ENCODE measurements at regions of chr3 and their contacts with region 1.

Region 1: GRCh38 chr3:51982782-51983577 is at the start of gene ACY1:
- DNase-seq: peak in 1 of 2 experiments; percentile 89
- H3K4me3 ChIP-seq: peak within 1 kb of the TSS; percentile 53 to 63 (median 56)
- H3K27ac ChIP-seq: peak within 1 kb of the TSS; percentile 45; the same call in 1 of the 2 replicates
- H3K4me1 ChIP-seq: peaks cover 0 to 12% (median 9%) of the 10 kb centered on the region in 4 experiments; a peak in 6 of 7 replicates
- H3K27me3 ChIP-seq: no peaks in the 10 kb centered on the region
- CTCF ChIP-seq: no peak
- EP300 ChIP-seq: no peak
- POLR2A ChIP-seq: peak in 1 of 2 experiments; percentile 86; a peak in 2 of 3 replicates
- RAD21 ChIP-seq: no peak
- total RNA-seq, gene ACY1: 45.5 and 48.3 TPM in 2 replicates

Region 2: GRCh38 chr3:51967384-51968169 is 15.4 kb before region 1 on chr3 and contains the start of gene PCBP4:
- CTCF ChIA-PET with region 1: interaction called, 66 read pairs
- POLR2A ChIA-PET with region 1: interaction called, 923 read pairs
- DNase-seq: peak in 1 of 2 experiments; percentile 77
- H3K4me3 ChIP-seq: peak within 1 kb of the TSS; percentile 57 to 90 (median 73)
- H3K27ac ChIP-seq: peak within 1 kb of the TSS; percentile 54
- H3K4me1 ChIP-seq: peaks cover 12 to 42% (median 33%) of the 10 kb centered on the region in 4 experiments
- H3K27me3 ChIP-seq: peaks cover 0 to 13% (median 2%) of the 10 kb centered on the region in 4 experiments; a peak in 5 of 7 replicates
- CTCF ChIP-seq: no peak
- EP300 ChIP-seq: no peak
- POLR2A ChIP-seq: no peak
- RAD21 ChIP-seq: no peak
- total RNA-seq, gene PCBP4: 16.4 and 19.6 TPM in 2 replicates

Measured in H1 (cell line).